ENCODE measurements at regions of chr19 and their contacts with region 1.

Region 1: DNA sequence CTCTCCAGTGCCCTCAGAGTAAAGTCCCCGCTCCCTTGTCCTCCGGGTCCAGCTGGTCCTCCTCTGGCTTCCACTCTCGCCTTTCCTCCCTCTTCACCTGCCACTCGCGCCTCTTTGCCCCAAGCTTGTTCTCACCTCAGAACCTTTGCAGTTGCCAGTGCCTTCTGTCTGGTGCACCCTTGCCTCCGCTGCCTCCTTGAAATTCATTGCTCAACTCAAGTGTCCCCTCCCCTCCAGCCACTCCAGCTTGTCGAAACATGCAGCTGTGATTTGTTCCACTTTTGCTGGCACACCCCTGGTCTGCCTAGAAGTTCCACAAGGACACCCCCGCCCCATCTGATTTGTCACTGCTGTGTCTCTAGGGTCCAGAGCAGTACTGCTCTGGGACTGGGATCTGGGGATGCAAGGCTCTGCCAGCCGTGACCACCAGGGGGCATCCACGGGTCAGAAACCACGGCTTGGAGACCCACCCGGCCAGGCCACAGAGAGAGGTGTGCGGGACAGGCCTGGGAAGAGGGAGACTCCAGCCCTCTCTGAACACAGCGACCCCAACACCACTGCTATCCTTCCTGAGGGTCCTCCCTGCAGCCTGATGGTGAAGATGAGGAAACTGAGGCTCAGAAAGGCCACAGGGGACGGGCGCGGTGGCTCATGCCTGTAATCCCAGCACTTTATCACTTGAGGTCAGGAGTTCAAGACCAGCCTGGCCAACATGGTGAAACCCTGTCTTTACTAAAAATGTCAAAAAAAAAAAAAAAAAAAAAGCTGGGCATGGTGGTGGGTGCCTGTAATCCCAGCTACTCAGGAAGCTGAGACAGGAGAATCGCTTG is 49.9 kb downstream of the AP1M1 start:
- DNase-seq: peak; percentile 4
- H3K4me3 ChIP-seq: no peak overlapping the region
- CTCF ChIP-seq: peak; percentile 96

Region 2: GRCh38 chr19:16259385-16260159 is 12.0 kb after region 1 on chr19:
- CTCF ChIA-PET with region 1: interaction called, 16 read pairs
- POLR2A ChIA-PET with region 1: no interaction called
- DNase-seq: no peak
- H3K4me3 ChIP-seq: no peak overlapping the region
- CTCF ChIP-seq: no peak

Region 3: GRCh38 chr19:16330368-16330801 is 82.8 kb after region 1 on chr19:
- CTCF ChIA-PET with region 1: interaction called, 11 read pairs
- POLR2A ChIA-PET with region 1: interaction called, 6 read pairs
- DNase-seq: no peak
- H3K4me3 ChIP-seq: no peak overlapping the region
- CTCF ChIP-seq: no peak

Region 4: GRCh38 chr19:16371540-16371986 is 124.0 kb after region 1 on chr19:
- CTCF ChIA-PET with region 1: interaction called, 25 read pairs
- POLR2A ChIA-PET with region 1: no interaction called
- DNase-seq: no peak
- H3K4me3 ChIP-seq: no peak overlapping the region
- CTCF ChIP-seq: no peak

Region 5: DNA sequence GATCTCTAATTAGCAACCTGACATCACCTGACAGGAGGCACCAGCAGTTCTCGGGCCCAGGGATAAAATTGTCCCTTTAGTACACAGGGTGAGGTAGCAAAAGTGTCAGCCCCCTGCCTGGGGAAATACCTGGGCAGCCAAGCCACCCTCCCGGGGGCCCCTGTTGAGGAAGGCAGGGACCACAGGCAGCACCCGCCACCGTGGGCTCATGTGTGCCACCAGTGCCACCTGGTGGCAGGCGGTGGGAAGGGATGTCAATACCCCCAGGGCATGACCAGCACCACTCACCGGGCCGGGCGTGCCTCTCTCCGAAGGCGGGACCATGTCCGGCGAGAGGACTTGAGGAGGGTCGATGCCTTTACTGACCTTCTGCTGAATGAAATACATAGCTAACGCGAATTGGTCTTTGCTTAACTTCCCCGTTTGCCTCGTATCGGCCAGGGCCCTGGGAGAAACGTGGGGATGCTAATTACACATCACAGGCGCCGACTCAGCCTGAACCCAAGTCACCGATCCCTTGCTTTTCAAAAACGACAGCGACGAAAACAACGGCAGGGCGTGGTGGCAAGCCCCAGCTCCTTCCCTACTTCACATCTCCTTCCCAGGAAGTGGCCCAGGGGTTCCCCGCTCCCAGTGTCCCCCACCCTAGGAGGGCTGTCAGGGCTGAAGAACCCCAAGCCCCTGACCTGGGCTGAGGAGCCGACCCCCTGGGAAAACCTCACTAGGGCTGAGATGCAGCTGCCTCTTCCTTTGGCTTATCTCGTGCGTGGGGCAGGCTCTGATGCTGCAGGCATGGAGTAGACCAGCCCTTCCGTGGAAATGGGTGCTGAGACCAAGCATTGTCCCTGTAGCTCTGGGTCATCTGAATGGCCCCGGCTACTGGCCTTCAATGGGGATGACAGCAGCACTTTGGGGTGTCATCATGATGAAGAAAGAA is 170.4 kb after region 1 on chr19:
- CTCF ChIA-PET with region 1: interaction called, 25 read pairs
- POLR2A ChIA-PET with region 1: no interaction called
- DNase-seq: no peak
- H3K4me3 ChIP-seq: no peak overlapping the region
- CTCF ChIP-seq: peak; percentile 87